ENCODE measurements at regions of chr1 and their contacts with region 1.

Region 1: DNA sequence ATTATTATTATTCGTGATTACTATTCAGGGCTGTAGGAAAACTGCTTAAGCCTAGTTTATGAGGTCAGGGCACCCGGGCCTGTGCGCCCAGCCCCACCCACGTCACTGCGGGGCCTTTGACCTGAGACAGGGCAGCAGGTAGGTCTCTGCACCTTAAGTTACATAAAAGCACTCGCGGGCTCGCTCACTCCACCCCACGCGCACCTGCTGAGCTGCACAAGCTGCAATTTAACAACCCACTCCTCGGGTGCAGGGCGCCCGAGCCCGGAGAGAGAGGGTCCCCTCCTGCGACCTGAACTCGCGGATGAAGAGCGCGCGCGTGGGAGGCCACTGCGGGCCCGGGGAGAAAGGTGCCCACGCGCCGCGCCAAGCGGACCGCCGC is 477 bp downstream of the ICMT start:
- DNase-seq: no peak
- ATAC-seq: no peak
- H3K4me3 Mint-ChIP-seq: peak overlapping the region; percentile 85
- H3K27ac Mint-ChIP-seq: peak overlapping the region; percentile 84
- H3K4me1 Mint-ChIP-seq: peaks cover 44% of the 10 kb centered on the region
- H3K27me3 Mint-ChIP-seq: no peaks in the 10 kb centered on the region
- CTCF ChIP-seq: no peak

Region 2: DNA sequence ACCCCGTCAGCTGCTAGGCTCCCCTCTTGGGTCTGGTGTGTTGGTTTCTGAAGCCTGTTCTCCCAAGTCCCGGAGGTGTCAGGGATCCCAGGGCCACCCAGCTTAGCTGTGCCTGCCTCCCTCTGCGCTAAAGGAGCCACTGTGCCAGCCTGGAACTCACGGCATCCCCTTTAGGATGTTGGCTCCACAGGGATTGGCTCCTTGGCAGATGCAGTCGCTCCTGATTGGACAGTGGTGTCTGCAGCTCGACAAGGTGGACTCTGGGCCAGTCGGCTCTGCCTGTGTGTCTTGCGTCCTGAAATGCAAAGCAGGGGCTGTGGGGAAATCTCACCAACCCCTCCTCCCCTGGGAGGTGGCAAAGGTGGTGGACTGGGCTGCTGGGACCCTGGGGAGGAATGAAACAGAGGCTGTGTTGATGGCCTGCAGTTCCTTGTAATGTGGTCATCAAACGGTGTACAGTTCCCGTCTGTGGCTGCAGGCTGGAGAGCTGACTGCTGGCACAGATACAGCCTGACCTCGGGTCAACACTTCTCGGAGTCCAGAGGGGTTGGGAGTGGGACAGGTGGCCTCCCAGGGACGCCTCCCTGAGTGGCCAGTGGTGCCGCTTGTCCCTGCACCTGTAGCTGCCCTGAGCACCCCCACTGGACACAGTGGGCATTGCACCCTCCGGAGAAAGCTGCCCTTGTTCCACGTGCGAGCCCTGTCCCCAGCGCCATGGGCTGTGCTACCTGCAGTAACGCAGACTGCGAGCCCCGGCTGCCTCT is 201.1 kb before region 1 on chr1:
- CTCF ChIA-PET with region 1: interaction called, 14 read pairs
- POLR2A ChIA-PET with region 1: no interaction called
- DNase-seq: peak; percentile 86
- ATAC-seq: peak; percentile 91
- H3K4me3 Mint-ChIP-seq: peak overlapping the region; percentile 44
- H3K27ac Mint-ChIP-seq: no peak overlapping the region
- H3K4me1 Mint-ChIP-seq: peaks cover 17% of the 10 kb centered on the region
- H3K27me3 Mint-ChIP-seq: peaks cover 5% of the 10 kb centered on the region
- CTCF ChIP-seq: peak; percentile 95

Region 3: DNA sequence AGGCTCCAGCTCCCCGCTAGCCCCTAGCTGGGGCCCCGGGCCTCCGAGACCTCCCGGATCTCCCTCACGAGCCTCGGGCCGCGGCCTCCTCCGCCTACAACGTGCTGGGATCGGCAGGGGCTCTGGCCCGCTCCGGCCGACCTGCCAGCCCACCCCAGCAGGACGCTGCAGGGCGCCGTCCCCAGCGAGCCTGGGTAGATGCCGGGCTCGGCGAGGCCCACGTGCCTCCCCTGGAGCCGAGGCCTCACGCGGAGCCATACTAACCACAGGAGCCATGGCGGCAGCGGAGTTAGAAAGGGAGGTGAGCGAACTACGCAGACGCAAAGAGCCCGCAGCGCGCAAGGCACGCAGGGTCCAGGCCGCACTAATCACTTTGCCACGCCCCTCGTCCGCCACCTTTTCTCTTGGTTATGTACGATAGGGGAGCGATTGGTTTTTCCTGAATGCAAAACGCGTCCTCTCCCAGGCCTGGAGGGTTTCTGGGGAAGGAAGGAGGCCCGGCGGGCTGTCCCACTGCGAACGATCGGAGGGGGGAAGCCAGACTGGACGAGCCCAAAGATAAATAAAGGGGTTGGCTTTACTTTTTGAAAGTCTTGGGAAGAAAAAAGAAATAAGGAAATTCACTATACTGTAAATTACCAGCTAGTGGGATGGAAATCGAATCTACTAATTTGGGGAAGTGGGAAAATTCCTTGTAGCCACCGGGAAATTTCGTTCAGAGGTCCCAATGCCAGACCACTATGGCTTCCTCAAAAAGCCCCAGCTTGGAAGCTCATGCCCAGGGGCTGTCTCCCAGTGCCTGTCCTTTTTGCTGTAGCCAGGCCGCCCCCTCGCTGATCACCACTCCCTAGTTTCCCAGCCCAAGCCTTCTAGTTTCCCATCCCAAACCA is 35.7 kb before region 1 on chr1 and contains the start of gene RPL22:
- CTCF ChIA-PET with region 1: interaction called, 489 read pairs
- POLR2A ChIA-PET with region 1: interaction called, 8 read pairs
- DNase-seq: peak; percentile 99
- ATAC-seq: peak; percentile 93
- H3K4me3 Mint-ChIP-seq: peak within 1 kb of the TSS; percentile 97
- H3K27ac Mint-ChIP-seq: peak within 1 kb of the TSS; percentile 96
- H3K4me1 Mint-ChIP-seq: peaks cover 37% of the 10 kb centered on the region
- H3K27me3 Mint-ChIP-seq: no peaks in the 10 kb centered on the region
- CTCF ChIP-seq: no peak
- total RNA-seq, gene RPL22: 441 to 512 TPM (median 491 TPM) in 3 replicates

Region 4: DNA sequence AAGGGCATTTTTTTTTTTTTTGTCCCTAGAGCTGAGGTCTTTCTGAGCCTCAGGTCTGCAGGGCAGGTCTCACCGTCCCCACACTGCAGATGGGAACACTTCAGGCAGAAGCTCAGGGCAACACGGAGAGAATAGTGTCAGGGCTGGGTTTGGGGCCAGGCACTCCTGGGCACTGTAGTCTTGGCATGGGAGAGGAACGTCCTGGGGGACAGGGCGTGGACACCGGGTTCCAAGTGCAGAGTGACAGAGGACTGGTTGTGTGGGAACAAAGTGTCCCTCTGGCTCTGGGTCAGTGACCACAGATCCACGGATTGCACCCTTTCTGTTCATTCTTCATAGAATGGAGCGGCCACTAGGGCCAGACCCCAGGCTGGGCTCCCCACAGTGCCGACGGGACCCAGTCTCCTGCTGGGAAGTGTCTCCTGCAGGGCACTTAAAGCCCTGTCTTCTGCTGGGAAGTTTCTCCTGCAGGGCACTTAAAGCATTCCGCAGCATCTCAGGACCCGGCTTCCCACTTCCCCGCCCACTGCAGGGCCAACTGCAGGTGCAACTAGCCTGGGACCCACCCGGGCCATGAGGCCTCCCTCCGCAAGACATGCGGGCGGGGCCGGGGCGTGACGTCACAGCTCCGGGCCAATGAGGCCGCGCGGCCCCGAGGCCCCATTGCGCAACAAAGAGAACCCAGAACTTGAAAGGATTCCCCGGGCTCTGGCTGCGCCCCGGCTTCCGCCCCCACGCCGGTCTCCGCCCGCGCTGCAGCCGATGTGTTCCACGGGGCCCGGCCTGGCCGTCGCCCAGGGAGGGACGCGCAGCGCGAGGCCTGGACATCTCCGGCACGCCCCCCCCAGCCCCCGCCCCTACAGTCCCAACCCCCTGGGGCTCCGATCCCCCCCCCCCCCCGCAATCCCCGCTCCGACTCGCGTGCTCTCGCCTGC is 24.5 kb after region 1 on chr1:
- CTCF ChIA-PET with region 1: interaction called, 26 read pairs
- POLR2A ChIA-PET with region 1: no interaction called
- DNase-seq: peak; percentile 90
- ATAC-seq: peak; percentile 40
- H3K4me3 Mint-ChIP-seq: peak overlapping the region; percentile 49
- H3K27ac Mint-ChIP-seq: no peak overlapping the region
- H3K4me1 Mint-ChIP-seq: peaks cover 9% of the 10 kb centered on the region
- H3K27me3 Mint-ChIP-seq: peaks cover 21% of the 10 kb centered on the region
- CTCF ChIP-seq: no peak

Region 5: DNA sequence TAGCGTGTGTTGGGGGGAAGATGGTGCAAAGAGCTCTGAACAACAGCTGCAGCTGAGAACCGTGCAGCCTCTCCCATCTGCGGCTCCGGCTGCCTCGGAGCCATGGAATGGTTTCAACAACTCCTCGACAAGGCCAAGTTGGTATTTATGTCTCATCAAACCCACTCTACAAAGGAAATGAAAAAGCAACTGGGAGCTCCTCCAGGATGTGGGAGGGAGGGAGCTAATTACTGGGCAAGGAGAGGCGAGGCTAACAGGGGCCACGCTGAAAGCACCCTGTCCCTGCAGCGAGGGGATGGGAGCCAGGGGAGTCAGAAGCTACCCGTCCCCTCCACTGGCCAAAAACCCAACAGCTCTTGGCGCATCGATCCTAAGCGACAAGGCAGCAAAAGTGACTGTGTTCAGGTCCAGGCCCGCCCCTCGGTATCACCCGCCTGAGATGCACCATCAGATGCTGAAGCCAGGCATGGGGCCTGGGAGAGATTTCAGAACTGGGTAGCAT is 95.2 kb after region 1 on chr1:
- CTCF ChIA-PET with region 1: no interaction called
- POLR2A ChIA-PET with region 1: no interaction called
- DNase-seq: no peak
- ATAC-seq: no peak
- H3K4me3 Mint-ChIP-seq: no peak overlapping the region
- H3K27ac Mint-ChIP-seq: peak overlapping the region; percentile 68
- H3K4me1 Mint-ChIP-seq: peaks cover 3% of the 10 kb centered on the region
- H3K27me3 Mint-ChIP-seq: no peaks in the 10 kb centered on the region
- CTCF ChIP-seq: no peak

Region 6: DNA sequence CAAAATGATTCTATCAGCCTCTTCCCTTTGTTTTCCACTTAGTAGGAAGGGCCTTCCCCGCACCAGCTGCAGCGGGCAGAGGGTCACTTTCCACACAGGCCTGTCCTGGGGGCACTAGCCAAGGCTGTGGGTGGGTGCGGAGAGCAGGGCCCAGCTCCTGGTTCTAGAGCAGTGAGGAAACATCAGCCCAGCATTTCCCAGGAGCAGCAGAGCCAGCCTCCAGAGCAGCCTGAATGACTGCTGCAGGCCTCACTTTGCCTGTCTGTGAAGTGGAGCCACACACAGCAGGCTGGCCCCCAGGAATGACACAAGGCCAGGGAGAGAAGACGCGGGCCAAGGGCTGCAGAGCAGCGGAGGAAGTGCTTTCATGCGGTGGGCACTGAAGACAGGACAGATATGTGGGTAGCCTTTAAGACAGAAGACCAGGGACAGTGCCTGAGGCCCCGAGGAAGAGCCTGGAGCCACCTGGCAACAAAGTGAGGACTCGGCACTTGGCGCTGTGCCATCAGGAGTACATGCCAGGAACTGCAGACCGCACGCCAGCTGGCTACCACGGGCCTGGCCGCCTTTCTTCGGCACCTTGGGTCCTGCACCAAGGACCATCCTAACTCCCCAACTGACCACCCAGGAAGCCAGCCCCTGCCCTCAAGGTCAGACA is 116.3 kb after region 1 on chr1:
- CTCF ChIA-PET with region 1: interaction called, 10 read pairs
- POLR2A ChIA-PET with region 1: no interaction called
- DNase-seq: no peak
- ATAC-seq: no peak
- H3K4me3 Mint-ChIP-seq: no peak overlapping the region
- H3K27ac Mint-ChIP-seq: peak overlapping the region; percentile 90
- H3K4me1 Mint-ChIP-seq: peaks cover 24% of the 10 kb centered on the region
- H3K27me3 Mint-ChIP-seq: no peaks in the 10 kb centered on the region
- CTCF ChIP-seq: no peak

Region 7: DNA sequence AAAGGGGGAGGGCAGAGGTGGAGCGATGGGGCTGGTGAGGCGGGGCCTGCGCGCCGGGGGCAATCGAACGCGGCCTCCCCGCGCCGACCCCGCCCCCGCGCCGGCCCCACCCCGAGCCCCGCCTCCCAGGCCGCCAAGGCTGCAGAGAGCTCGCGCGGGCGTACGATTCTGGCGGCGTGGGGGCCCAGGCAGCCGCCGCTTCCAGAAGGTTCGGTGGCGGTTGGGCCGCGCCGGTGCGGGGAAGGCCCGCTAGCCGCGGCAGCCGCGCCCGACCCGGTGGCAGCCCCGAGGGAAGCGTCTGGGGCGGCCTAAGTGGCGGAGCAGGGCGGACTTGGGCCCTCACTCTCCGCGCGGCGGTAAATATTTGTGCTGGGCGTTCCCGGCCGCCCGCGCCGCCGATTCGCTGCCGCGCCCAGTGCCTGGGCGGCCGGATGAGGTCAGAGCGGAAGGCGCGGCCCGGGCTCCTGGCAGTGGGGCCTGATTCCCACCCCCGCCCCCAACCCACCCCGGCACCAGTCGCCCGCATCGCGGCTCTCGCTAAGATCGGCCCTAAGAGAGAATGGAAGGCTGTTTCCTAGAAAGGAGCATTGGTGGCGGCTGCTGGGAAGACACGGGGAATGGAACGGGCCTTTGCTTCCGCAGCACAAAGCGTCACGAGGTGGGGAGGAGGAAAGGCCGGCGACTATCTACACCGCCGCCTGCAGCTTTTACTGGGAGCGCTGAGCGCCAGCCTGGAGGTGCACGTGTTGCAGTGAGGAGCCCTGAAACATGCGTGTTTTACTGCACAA is 158.3 kb after region 1 on chr1 and contains the start of gene ACOT7:
- CTCF ChIA-PET with region 1: interaction called, 10 read pairs
- POLR2A ChIA-PET with region 1: no interaction called
- DNase-seq: peak; percentile 89
- ATAC-seq: peak; percentile 88
- H3K4me3 Mint-ChIP-seq: peak within 1 kb of the TSS; percentile 80
- H3K27ac Mint-ChIP-seq: peak within 1 kb of the TSS; percentile 95
- H3K4me1 Mint-ChIP-seq: peaks cover 18% of the 10 kb centered on the region
- H3K27me3 Mint-ChIP-seq: peaks cover 9% of the 10 kb centered on the region
- CTCF ChIP-seq: no peak
- total RNA-seq, gene ACOT7: 133 to 151 TPM (median 137 TPM) in 3 replicates

Region 8: DNA sequence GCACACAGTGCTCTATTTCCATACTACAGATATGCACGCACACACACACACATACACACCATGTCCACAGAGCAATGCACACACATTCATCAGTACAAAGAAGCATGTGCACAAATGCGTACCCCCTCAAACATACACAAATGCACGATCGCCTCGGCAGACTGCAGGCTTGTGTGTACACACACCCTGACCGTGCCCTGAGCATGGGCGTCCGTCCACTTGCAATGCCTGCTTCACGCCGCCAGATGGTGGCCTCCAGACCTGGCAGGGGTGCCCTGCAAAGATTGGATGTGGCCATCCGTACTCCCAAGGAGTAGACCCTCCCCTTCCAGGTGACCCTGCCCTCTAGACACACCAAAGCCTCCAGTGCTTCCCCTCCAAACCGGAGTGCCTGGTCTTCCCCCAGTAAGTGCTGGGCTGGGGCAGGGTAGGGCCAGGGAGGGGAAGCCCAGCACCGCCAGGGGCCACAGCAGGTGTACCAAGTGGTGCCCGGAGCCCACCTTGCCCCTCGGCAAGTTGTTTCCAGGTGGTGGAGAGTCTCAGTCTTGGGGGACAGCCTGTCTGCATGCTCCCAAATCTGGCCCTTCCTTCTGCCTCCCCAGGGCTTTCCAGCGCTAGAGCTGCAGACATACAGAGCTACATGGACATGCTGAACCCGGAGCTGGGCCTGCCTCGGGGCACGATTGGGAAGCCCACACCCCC is 209.9 kb after region 1 on chr1:
- CTCF ChIA-PET with region 1: interaction called, 29 read pairs
- POLR2A ChIA-PET with region 1: no interaction called
- DNase-seq: peak; percentile 78
- ATAC-seq: peak; percentile 14
- H3K4me3 Mint-ChIP-seq: no peak overlapping the region
- H3K27ac Mint-ChIP-seq: peak overlapping the region; percentile 58
- H3K4me1 Mint-ChIP-seq: peaks cover 37% of the 10 kb centered on the region
- H3K27me3 Mint-ChIP-seq: peaks cover 17% of the 10 kb centered on the region
- CTCF ChIP-seq: peak; percentile 49; the same call in 1 of the 2 replicates

Measured in WTC11 (cell line).